ENCODE measurements at regions of chr7 and their contacts with region 1.

Region 1: GRCh38 chr7:93117852-93118530 is at the start of gene SAMD9:
- DNase-seq: peak; percentile 70
- H3K4me3 Mint-ChIP-seq: peak within 1 kb of the TSS; percentile 75
- H3K27ac Mint-ChIP-seq: peak within 1 kb of the TSS; percentile 70
- H3K4me1 Mint-ChIP-seq: peaks cover 54% of the 10 kb centered on the region
- H3K27me3 Mint-ChIP-seq: no peaks in the 10 kb centered on the region
- CTCF ChIP-seq: no peak
- total RNA-seq, gene SAMD9: 74.8 and 167 TPM in 2 replicates

Region 2: GRCh38 chr7:93147363-93147762 is 29.4 kb after region 1 on chr7:
- CTCF ChIA-PET with region 1: interaction called, 8 read pairs
- intact Hi-C with region 1: loop called (anchors 2 kb)
- DNase-seq: peak; percentile 41
- H3K4me3 Mint-ChIP-seq: peak overlapping the region; percentile 55
- H3K27ac Mint-ChIP-seq: peak overlapping the region; percentile 70
- H3K4me1 Mint-ChIP-seq: peaks cover 48% of the 10 kb centered on the region
- H3K27me3 Mint-ChIP-seq: no peaks in the 10 kb centered on the region
- CTCF ChIP-seq: no peak